HEK293 (cell line): ENCODE measurements at regions of chr12 and their contacts with region 1.

Region 1: DNA sequence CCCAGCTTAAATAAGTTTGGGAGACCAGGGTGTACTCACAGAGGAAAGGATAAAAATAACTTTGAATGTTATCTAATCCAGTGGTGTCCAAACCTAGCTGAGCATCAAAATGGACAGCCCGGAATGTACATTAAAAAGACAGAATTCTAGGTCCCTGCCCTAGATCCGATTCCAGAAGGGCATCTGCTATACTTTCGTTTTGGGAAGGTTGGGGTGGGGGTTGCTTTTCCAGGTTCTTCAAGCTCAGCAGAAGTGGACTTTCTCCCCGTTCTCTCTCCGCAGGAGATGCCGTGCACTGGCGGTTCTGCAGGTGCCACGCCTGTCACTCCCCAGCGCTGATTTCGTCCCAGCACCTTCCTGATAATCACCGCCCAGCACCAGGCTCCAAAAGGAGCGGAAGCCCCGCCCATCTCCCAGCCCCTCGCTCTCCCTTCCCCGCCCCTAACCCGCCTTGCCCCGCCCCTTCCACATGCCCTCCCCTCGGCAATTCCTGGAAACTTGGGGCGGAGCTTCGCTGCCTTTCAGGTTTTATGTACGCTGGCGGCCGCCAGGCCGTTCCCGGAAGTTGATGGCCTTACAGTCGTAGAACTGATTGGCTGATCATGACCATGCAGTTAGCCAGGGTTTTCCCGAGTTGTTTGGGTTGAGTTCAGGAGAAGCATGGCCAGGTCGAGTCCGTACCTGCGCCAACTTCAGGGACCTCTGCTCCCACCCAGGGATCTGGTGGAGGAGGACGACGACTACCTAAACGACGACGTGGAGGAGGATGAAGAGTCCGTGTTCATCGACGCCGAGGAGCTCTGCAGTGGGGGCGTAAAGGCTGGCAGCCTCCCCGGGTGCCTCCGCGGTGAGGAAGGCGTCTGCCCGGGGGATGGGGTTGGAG is at the start of gene HELB:
- H3K4me3 ChIP-seq: peak within 1 kb of the TSS; percentile 85
- H3K27ac ChIP-seq: peak within 1 kb of the TSS; percentile 81
- H3K4me1 ChIP-seq: no peaks in the 10 kb centered on the region
- CTCF ChIP-seq: no peak

Region 2: DNA sequence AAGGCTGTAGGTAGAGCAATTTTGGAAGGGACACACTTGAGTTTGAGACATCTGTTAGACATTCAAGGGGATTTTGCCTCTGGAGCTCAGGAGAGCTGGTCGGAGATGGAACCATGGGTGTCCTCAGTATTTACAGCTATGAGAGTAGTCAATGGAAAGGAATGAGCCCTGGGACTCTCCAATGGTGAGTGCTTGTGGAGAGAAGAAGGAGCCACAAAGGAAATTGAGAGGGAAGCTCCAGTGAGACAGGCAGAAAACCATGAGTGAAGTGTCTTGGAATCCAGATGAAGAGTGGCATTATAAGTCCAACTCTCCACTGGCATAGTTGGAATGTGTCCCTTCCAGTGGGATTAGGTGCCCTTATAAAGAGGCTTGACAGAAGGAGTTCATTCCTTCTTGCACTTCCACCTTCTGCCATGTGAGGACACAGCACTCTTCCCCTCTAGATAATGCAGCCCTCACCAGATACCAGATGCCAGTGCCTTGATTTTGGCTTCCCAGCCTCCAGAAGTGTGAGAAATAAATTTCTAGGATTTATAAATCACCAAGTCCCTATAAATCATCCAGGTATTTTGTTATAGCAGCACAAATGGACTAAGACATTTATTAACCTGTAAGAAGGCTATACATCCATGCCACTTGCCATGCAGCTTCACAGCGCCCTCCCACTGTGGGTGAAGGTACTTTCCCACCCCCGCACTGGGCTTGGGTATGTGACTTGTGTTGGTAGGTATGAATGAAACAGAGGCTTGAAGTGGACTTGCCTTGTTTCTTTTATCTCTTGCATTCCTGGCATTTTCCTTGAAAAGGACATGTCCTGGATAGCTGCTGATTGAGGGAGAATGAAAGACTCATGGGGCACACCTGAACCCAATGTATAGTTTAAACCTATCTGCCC is 198.9 kb before region 1 on chr12:
- CTCF ChIA-PET with region 1: no interaction called
- POLR2A ChIA-PET with region 1: no interaction called
- H3K4me3 ChIP-seq: no peak overlapping the region
- H3K27ac ChIP-seq: no peak overlapping the region
- H3K4me1 ChIP-seq: no peaks in the 10 kb centered on the region
- CTCF ChIP-seq: no peak

Region 3: GRCh38 chr12:66290716-66291200 is 11.4 kb before region 1 on chr12:
- CTCF ChIA-PET with region 1: interaction called, 3 read pairs
- POLR2A ChIA-PET with region 1: interaction called, 10 read pairs
- H3K4me3 ChIP-seq: no peak overlapping the region
- H3K27ac ChIP-seq: no peak overlapping the region
- H3K4me1 ChIP-seq: no peaks in the 10 kb centered on the region
- CTCF ChIP-seq: no peak

Region 4: GRCh38 chr12:66371982-66372381 is 69.8 kb after region 1 on chr12:
- CTCF ChIA-PET with region 1: no interaction called
- POLR2A ChIA-PET with region 1: no interaction called
- H3K4me3 ChIP-seq: no peak overlapping the region
- H3K27ac ChIP-seq: no peak overlapping the region
- H3K4me1 ChIP-seq: no peaks in the 10 kb centered on the region
- CTCF ChIP-seq: no peak